OCI-LY7 (cell line): ENCODE measurements at regions of chr22 and their contacts with region 1.

Region 1: DNA sequence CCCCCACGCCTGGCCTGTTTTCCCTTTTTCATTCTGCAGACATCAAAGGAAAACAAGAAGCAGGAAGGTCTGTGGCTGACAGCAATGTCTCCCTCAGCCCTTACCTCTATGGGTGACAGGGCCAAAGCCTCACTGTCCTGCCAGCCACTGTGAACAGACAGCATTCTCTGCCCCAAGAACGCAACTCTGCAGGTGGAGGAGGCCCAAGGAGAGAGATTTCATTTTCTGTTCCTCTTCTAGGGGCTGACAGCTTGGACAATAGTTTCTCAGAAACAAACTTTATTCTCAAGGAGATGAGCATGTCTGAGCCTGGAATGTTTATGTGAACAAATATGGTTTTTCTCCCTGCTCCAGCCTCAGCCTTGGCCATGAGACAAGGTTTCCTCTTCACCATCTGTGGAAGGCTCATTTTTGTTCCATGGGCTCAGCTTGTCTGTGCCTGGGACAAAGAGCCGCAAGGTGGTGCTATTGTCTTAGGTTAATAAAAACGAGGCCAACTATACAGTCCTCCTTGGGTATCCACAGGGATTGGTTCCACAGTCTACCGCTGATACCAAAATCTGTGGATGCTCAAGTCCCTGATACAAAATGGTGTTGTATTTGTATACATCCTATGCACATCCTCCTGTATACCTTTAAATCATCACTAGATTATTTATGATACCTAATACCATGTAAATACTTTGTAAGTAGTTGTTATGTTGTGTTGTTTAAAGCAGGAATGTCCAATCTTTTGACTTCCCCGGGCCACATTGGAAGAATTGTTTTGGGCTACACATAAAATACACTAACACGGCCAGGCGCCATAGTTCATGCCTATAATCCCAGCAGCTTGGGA is 5.8 kb downstream of the PIWIL3 start:
- DNase-seq: peak; percentile 50
- H3K4me3 ChIP-seq: no peak overlapping the region
- H3K27ac ChIP-seq: no peak overlapping the region
- H3K4me1 ChIP-seq: no peaks in the 10 kb centered on the region
- CTCF ChIP-seq: peak; percentile 81

Region 2: GRCh38 chr22:24845041-24845898 is 76.5 kb after region 1 on chr22:
- CTCF ChIA-PET with region 1: no interaction called
- POLR2A ChIA-PET with region 1: interaction called, 3 read pairs
- intact Hi-C with region 1: loop called (anchors 2 kb)
- DNase-seq: no peak
- H3K4me3 ChIP-seq: no peak overlapping the region
- H3K27ac ChIP-seq: no peak overlapping the region
- H3K4me1 ChIP-seq: no peaks in the 10 kb centered on the region
- CTCF ChIP-seq: no peak

Region 3: DNA sequence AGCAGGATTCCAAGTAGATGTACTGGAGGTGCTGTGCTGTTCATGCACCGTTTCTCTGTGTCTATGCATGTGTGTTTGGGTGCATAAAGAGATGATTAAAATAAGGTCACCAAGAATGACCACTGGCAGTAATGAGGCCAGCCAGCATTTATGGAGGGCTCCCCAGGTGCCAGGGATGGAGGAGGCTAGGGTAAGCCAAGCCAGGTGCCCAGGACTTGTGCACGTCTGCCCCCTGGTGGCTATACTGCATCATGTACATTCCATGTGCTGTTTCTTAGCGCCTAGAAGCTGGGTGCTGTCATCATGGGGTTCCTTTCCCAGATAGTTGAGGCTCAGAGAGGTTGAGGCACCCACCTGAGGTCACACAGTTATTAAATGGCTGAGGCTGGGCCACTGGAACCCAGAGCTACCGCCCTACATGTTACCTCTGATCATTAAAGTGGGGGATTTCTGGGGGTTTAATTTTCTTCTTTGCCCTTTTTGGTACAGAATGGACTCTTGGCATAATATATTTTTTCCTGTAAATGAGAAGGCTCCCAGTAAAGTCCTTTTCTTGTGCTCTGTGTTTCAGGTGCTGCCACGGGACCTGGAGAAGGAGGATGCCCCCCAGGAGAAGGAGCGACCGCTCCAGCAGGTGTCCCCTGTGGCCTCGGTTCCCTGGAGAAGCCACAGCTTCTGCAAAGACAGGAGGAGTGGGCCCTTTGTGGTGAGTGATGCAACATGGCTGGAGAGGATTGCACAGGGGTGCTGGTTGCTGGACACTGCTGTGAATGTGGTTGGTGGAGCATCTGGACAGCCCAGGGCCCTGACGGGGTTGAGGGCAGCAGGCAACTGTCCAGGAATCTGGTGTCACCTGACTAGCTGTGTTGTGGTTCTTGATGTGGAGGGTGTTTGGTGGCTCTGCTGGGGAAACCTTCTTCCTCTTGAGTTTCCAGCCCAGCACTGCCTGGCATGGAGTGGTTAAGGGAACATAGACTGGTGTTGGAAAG is 280.2 kb after region 1 on chr22:
- CTCF ChIA-PET with region 1: no interaction called
- POLR2A ChIA-PET with region 1: no interaction called
- intact Hi-C with region 1: loop called (anchors 10 kb)
- DNase-seq: peak; percentile 67
- H3K4me3 ChIP-seq: no peak overlapping the region
- H3K27ac ChIP-seq: no peak overlapping the region
- H3K4me1 ChIP-seq: no peaks in the 10 kb centered on the region
- CTCF ChIP-seq: peak; percentile 87